CD4-positive, alpha-beta memory T cell (primary cell): ENCODE measurements at regions of chr14 and their contacts with region 1.

Region 1: DNA sequence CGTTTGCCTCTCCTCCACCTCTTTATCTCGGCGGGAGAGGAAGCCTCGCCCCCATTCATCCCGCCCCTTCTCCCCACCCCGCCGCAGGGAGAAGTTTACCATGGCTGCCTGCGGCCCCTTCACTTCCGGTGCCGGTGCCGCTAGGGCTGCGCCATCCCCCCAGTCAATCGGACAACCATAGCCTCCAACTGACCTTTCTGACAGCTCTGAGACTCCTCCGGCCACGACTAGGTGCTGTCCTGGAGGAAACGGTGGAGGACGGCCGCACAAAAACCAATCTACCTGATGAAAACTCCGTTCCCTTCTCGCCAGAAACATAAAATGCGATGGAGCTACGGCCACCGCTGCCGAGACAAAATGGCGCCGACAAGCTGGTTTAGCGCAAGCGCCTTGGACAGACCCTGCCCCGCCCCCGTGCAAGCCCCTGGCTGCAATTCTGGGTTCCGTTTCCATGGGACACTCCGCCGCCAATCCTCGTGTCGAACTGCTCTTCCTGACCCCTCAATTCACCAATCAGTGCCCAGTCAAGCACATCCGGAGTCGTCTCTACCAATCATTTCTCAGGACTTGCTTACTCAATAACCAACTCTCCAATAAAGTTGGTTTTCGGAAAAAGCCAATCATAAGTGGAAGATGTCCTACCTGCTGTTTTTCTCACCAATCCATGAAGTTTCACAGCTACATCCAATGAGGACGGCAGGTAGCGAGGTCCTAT is 436 bp upstream of the ARID4A start:
- DNase-seq: peak; percentile 98 to 100 (median 99)
- H3K4me3 ChIP-seq: peak overlapping the region; percentile 76 to 96
- H3K4me3 Mint-ChIP-seq: no peak overlapping the region
- H3K27ac ChIP-seq: peak overlapping the region; percentile 94
- H3K27ac Mint-ChIP-seq: no peak overlapping the region
- H3K4me1 ChIP-seq: peaks cover 58% of the 10 kb centered on the region
- H3K4me1 Mint-ChIP-seq: peaks cover 26 to 66% (median 30%) of the 10 kb centered on the region in 4 donors
- H3K27me3 ChIP-seq: no peaks in the 10 kb centered on the region
- H3K27me3 Mint-ChIP-seq: no peaks in the 10 kb centered on the region

Region 2: GRCh38 chr14:58199726-58200479 is 98.0 kb before region 1 on chr14 and contains the start of gene ACTR10:
- CTCF ChIA-PET with region 1: interaction called, 3 read pairs
- POLR2A ChIA-PET with region 1: interaction called, 43 read pairs
- intact Hi-C with region 1: loop called (anchors 1 kb)
- DNase-seq: peak; percentile 84 to 91 (median 87)
- H3K4me3 ChIP-seq: peak within 1 kb of the TSS; percentile 64 to 75
- H3K4me3 Mint-ChIP-seq: peak within 1 kb of the TSS; percentile 94 to 97 (median 96)
- H3K27ac ChIP-seq: peak within 1 kb of the TSS; percentile 78
- H3K27ac Mint-ChIP-seq: peak within 1 kb of the TSS; percentile 94 to 99 (median 98)
- H3K4me1 ChIP-seq: peaks cover 33% of the 10 kb centered on the region
- H3K4me1 Mint-ChIP-seq: peaks cover 22 to 48% (median 34%) of the 10 kb centered on the region in 4 donors
- H3K27me3 ChIP-seq: no peaks in the 10 kb centered on the region
- H3K27me3 Mint-ChIP-seq: no peaks in the 10 kb centered on the region
- total RNA-seq, gene ACTR10: 53.7 to 54.9 TPM

Region 3: DNA sequence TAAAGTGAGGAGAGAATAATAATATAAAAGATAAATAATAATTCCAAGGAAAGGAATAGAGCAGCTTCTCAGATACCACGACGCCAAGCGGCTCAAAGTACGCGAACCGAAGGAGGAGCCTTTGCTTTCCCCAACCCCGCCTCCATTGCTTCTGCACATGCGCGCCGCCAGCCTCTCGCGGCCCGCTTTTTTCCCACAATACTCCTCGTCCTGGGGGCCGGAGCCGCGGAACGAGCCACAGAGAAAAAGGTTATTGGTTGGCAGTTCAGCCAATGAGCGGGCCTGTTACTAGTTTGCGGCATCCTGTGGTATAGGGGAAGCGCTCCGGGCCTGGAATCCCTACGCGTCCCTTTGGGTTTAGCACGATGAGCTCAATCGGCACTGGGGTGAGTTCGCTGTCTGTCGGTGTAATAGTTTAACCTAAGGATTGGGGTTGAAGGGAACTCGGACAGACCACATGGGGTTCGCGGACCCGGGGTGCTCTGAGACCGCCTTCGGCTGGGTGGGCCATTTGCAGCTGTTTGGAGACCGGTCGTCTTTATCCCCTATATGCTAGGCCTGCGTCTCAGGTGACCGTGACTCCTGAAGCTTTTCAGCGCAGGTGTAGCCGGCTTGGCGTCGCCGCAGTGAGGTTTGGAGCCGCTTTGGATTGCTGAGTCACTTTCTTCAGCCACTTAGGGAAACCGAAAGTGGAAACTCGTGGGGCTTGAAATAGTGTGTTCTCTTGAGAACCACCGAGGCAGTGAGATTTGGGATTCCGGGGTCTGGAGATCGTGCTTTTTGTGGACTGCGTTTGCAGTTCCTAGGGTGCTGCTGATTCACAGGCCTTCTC is 53.1 kb before region 1 on chr14 and contains the start of gene PSMA3:
- CTCF ChIA-PET with region 1: interaction called, 3 read pairs
- POLR2A ChIA-PET with region 1: interaction called, 91 read pairs
- intact Hi-C with region 1: loop called (anchors 1 kb)
- DNase-seq: peak; percentile 98
- H3K4me3 ChIP-seq: peak within 1 kb of the TSS; percentile 98 to 100
- H3K4me3 Mint-ChIP-seq: peak within 1 kb of the TSS; percentile 96 to 99 (median 98)
- H3K27ac ChIP-seq: peak within 1 kb of the TSS; percentile 96
- H3K27ac Mint-ChIP-seq: peak within 1 kb of the TSS; percentile 98 to 99 (median 99)
- H3K4me1 ChIP-seq: peaks cover 40% of the 10 kb centered on the region
- H3K4me1 Mint-ChIP-seq: peaks cover 35 to 57% (median 48%) of the 10 kb centered on the region in 4 donors
- H3K27me3 ChIP-seq: no peaks in the 10 kb centered on the region
- H3K27me3 Mint-ChIP-seq: peaks cover 0 to 1% of the 10 kb centered on the region in 2 donors
- total RNA-seq, gene PSMA3: 133 to 138 TPM

Region 4: GRCh38 chr14:58265401-58265800 is 32.5 kb before region 1 on chr14:
- CTCF ChIA-PET with region 1: no interaction called
- POLR2A ChIA-PET with region 1: interaction called, 19 read pairs
- intact Hi-C with region 1: no loop called
- DNase-seq: no peak
- H3K4me3 ChIP-seq: no peak overlapping the region
- H3K4me3 Mint-ChIP-seq: no peak overlapping the region
- H3K27ac ChIP-seq: no peak overlapping the region
- H3K27ac Mint-ChIP-seq: peak overlapping the region in 4 of 7 donors; percentile 6 to 48 (median 25)
- H3K4me1 ChIP-seq: no peaks in the 10 kb centered on the region
- H3K4me1 Mint-ChIP-seq: peaks cover 4 to 16% (median 10%) of the 10 kb centered on the region in 4 donors
- H3K27me3 ChIP-seq: no peaks in the 10 kb centered on the region
- H3K27me3 Mint-ChIP-seq: no peaks in the 10 kb centered on the region

Region 5: DNA sequence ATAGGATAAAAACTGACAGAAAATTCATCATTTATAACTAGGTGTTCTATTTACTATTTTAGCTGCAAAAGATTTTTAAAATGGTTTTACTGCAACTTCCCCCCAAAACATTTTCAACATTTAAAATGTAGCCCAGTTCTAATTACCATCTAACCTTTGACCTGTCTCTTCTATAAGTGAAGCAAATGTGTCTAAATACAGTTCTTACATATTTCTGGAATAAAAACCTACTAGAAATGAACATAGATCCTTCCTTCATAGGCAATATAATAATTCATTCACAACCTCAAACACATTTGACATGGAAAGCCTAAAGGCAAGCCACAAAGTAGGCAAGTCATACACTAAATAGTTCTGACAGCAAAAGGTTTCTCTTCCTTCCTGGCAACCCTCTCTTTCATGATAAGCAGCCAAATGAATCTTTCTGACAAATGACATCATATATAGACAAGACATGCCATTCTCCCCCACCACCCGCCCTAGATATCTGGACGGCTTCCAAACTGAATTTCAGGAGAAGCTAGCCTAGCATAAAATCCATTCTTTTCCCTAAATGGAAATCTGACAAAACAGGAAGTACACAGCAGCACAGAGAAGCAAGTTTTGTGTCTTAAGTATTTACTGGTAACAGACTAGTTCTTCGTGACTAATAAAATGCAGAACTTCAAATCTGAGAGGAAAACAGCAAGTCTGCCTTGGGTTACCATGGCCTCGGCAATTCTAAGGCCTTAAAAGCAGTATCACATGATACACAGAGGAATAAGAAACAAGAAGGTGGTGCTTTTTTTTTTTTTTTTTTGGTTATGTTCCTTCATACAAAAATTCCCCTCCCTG is 16.7 kb before region 1 on chr14:
- CTCF ChIA-PET with region 1: interaction called, 5 read pairs
- POLR2A ChIA-PET with region 1: interaction called, 46 read pairs
- intact Hi-C with region 1: loop called (anchors 2 kb)
- DNase-seq: peak; percentile 25 to 68 (median 39)
- H3K4me3 ChIP-seq: no peak overlapping the region
- H3K4me3 Mint-ChIP-seq: peak overlapping the region in 7 of 8 donors; percentile 18 to 79 (median 60)
- H3K27ac ChIP-seq: peak overlapping the region; percentile 53
- H3K27ac Mint-ChIP-seq: peak overlapping the region; percentile 85 to 93 (median 91)
- H3K4me1 ChIP-seq: peaks cover 76% of the 10 kb centered on the region
- H3K4me1 Mint-ChIP-seq: peaks cover 57 to 76% (median 61%) of the 10 kb centered on the region in 4 donors
- H3K27me3 ChIP-seq: no peaks in the 10 kb centered on the region
- H3K27me3 Mint-ChIP-seq: no peaks in the 10 kb centered on the region

Region 6: GRCh38 chr14:58331111-58331510 is 33.2 kb after region 1 on chr14:
- CTCF ChIA-PET with region 1: interaction called, 5 read pairs
- POLR2A ChIA-PET with region 1: interaction called, 23 read pairs
- intact Hi-C with region 1: loop called (anchors 1 kb)
- DNase-seq: peak; percentile 92 to 97 (median 96)
- H3K4me3 ChIP-seq: no peak overlapping the region
- H3K4me3 Mint-ChIP-seq: peak overlapping the region; percentile 49 to 78 (median 71)
- H3K27ac ChIP-seq: peak overlapping the region; percentile 55
- H3K27ac Mint-ChIP-seq: peak overlapping the region; percentile 85 to 97 (median 95)
- H3K4me1 ChIP-seq: peaks cover 21% of the 10 kb centered on the region
- H3K4me1 Mint-ChIP-seq: peaks cover 17 to 20% (median 17%) of the 10 kb centered on the region in 4 donors
- H3K27me3 ChIP-seq: no peaks in the 10 kb centered on the region
- H3K27me3 Mint-ChIP-seq: no peaks in the 10 kb centered on the region

Region 7: DNA sequence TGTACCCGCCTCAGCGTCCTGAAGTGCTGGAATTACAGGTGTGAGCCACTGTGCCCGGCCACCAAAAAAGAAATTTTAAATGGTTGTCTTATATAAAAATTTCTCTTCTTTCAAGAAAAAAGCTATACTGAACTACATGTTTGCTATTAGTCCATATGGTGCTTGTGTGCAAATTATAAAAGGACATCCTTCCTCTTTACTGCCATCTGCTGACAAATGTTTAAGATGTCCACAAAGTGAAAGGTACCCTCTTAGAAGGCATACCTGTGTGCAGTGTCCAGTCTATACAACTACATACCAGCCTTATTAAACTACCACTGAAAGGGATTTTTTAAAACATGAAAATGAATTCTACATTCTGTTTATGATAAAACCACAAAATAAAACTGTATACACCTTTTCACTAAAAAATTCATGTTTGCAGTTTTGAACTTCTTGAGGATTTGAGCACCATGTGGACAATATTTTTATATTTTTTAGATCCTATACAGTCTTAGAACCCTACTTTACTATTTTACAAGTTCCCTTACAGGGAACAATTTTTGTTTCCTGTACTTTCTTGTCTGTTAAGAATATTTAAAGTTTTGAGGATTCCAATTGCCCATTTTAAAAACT is 65.0 kb after region 1 on chr14:
- CTCF ChIA-PET with region 1: no interaction called
- POLR2A ChIA-PET with region 1: no interaction called
- intact Hi-C with region 1: no loop called
- DNase-seq: peak in 4 of 5 donors; percentile 25 to 33 (median 28)
- H3K4me3 ChIP-seq: no peak overlapping the region
- H3K4me3 Mint-ChIP-seq: no peak overlapping the region
- H3K27ac ChIP-seq: no peak overlapping the region
- H3K27ac Mint-ChIP-seq: peak overlapping the region in 2 of 7 donors; percentile 17 to 19
- H3K4me1 ChIP-seq: no peaks in the 10 kb centered on the region
- H3K4me1 Mint-ChIP-seq: peaks cover 0 to 1% (median 0%) of the 10 kb centered on the region in 4 donors
- H3K27me3 ChIP-seq: no peaks in the 10 kb centered on the region
- H3K27me3 Mint-ChIP-seq: no peaks in the 10 kb centered on the region

Region 8: GRCh38 chr14:58427281-58428117 is 129.6 kb after region 1 on chr14 and contains the starts of genes KIAA0586 and TIMM9:
- CTCF ChIA-PET with region 1: interaction called, 4 read pairs
- POLR2A ChIA-PET with region 1: interaction called, 68 read pairs
- intact Hi-C with region 1: loop called (anchors 1 kb)
- DNase-seq: peak; percentile 95 to 99 (median 98)
- H3K4me3 ChIP-seq: peak within 1 kb of the TSS; percentile 90 to 96
- H3K4me3 Mint-ChIP-seq: peak within 1 kb of the TSS; percentile 91 to 97 (median 94)
- H3K27ac ChIP-seq: peak within 1 kb of the TSS; percentile 88
- H3K27ac Mint-ChIP-seq: peak within 1 kb of the TSS; percentile 94 to 100 (median 98)
- H3K4me1 ChIP-seq: peaks cover 39% of the 10 kb centered on the region
- H3K4me1 Mint-ChIP-seq: peaks cover 23 to 67% (median 44%) of the 10 kb centered on the region in 4 donors
- H3K27me3 ChIP-seq: no peaks in the 10 kb centered on the region
- H3K27me3 Mint-ChIP-seq: peaks cover 0 to 2% of the 10 kb centered on the region in 2 donors
- total RNA-seq, gene KIAA0586: 43.3 to 48.2 TPM
- total RNA-seq, gene TIMM9: 28.0 to 28.3 TPM